ENCODE measurements at regions of chr10 and their contacts with region 1.

Region 1: DNA sequence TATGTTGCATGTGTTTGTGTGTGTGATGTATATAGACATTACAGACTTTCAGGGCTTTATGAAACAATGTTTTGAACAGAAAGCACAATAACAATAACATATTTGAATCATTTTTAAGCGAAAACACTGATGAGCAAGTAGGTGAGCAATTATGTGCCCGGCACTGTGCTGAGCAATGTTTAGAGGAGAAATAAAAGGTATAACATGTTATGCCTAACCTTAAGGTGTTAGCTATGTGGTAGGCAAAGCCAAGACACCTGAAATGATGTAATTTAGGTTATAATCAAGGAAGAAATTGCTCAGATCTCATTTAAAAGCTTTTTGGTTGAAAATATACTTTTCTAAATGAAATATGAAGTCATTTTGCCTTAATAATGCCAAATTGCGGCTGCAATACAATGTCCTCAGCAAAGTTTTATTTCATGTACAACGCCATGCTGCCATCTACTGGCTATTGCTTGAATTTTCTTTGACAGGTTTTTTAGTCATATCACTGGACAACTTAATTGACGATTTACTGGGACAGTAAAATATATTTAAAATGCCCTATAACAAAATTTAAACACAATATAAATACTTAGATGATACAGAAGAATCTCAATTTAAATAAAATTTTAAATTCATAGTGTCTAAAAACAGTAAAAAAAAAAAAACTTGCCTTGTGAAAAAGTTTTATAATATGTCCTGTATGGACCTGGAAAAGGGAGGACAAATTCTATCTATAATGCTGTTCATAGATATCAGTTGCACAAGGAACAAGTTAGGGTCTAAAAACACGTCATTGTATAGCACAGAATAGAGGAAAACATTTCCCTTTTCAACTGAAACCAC is 131.1 kb upstream of the CDK1 start:
- DNase-seq: peak; percentile 71
- H3K4me3 Mint-ChIP-seq: no peak overlapping the region
- H3K27ac Mint-ChIP-seq: no peak overlapping the region
- H3K4me1 Mint-ChIP-seq: peaks cover 10% of the 10 kb centered on the region
- H3K27me3 Mint-ChIP-seq: no peaks in the 10 kb centered on the region

Region 2: DNA sequence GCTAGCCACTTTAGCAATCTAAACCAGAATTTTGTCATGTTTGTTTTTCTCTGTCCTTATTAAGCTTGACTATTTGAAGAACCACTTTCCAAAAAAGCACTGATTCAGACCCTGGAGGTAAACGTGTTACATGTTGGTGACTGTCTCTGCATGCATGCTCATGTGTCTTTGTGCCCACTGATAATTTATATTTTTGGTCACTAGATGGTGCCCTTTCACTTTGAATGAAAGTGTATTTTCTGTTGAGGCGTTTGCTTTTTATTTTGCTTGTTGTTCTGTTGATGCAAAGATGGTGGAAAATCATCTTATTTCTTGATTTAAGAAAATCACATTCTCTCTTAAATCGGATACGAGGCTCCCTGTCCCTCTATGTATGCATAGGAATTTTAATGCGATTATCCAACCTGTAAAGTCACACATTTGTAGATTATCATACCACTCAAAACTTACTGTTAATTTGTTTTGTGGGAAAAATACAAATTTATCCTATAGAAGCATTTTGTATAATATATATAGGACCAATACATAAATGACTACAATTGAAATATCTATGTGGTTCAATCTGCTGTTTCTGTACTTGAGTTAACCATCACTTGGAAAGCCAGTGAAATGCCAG is 1865.2 kb before region 1 on chr10:
- CTCF ChIA-PET with region 1: no interaction called
- intact Hi-C with region 1: loop called (anchors 10 kb)
- DNase-seq: peak; percentile 4
- H3K4me3 Mint-ChIP-seq: no peak overlapping the region
- H3K27ac Mint-ChIP-seq: no peak overlapping the region
- H3K4me1 Mint-ChIP-seq: no peaks in the 10 kb centered on the region
- H3K27me3 Mint-ChIP-seq: peaks cover 8% of the 10 kb centered on the region

Region 3: GRCh38 chr10:60208676-60209269 is 438.4 kb before region 1 on chr10:
- CTCF ChIA-PET with region 1: interaction called, 14 read pairs
- intact Hi-C with region 1: loop called (anchors 1 kb)
- DNase-seq: no peak
- H3K4me3 Mint-ChIP-seq: no peak overlapping the region
- H3K27ac Mint-ChIP-seq: no peak overlapping the region
- H3K4me1 Mint-ChIP-seq: peaks cover 17% of the 10 kb centered on the region
- H3K27me3 Mint-ChIP-seq: no peaks in the 10 kb centered on the region

Region 4: GRCh38 chr10:60314069-60314940 is 332.9 kb before region 1 on chr10:
- CTCF ChIA-PET with region 1: no interaction called
- intact Hi-C with region 1: loop called (anchors 10 kb)
- DNase-seq: no peak
- H3K4me3 Mint-ChIP-seq: no peak overlapping the region
- H3K27ac Mint-ChIP-seq: no peak overlapping the region
- H3K4me1 Mint-ChIP-seq: peaks cover 23% of the 10 kb centered on the region
- H3K27me3 Mint-ChIP-seq: no peaks in the 10 kb centered on the region

Region 5: DNA sequence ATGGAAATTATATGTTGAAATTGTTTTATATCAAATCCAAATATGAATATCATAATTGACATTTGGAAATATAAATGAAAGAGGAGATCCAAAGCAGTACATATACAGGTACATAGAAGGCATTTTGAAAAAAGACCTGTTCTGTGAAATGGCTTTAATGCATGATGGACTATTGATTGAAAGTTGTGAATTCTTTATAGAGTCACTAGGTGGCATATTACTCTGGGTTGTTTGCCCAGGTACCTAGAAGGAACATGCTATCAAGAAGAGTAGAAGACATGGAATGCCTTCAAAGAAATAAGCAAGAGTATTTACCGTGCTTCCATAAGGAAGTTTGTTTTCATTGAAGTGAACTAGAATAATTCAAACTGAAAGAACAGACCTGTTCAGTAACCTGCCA is 97.5 kb before region 1 on chr10:
- CTCF ChIA-PET with region 1: interaction called, 8 read pairs
- intact Hi-C with region 1: loop called (anchors 1 kb)
- DNase-seq: no peak
- H3K4me3 Mint-ChIP-seq: no peak overlapping the region
- H3K27ac Mint-ChIP-seq: no peak overlapping the region
- H3K4me1 Mint-ChIP-seq: peaks cover 1% of the 10 kb centered on the region
- H3K27me3 Mint-ChIP-seq: no peaks in the 10 kb centered on the region

Region 6: DNA sequence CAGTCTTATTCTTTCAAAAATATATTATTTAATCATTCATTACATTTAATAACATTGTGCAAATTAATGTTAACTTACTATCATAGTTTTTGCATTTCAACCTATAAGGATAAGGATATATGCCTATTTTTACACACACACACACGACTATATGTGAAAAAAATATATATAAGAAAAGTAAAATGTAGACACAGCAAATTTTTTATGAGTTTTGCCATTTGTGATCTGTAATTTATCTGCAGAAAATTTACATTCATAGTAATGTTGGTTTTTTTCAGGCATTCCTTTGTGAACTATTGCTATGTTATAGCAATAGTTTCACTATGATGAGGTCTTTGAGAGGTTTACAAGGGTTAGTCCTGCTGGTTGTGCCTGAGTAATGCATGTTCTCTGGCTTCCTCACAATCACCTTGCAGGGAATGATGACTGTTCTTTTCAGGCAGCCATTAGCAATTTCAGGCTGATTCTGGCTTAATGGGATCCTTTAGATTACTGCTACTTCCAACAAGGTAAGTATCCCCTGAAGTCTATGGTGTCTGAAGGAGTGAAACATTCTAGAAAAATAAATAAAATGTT is 52.6 kb before region 1 on chr10:
- CTCF ChIA-PET with region 1: no interaction called
- intact Hi-C with region 1: no loop called
- DNase-seq: peak; percentile 19
- H3K4me3 Mint-ChIP-seq: no peak overlapping the region
- H3K27ac Mint-ChIP-seq: no peak overlapping the region
- H3K4me1 Mint-ChIP-seq: peaks cover 19% of the 10 kb centered on the region
- H3K27me3 Mint-ChIP-seq: no peaks in the 10 kb centered on the region

Measured in activated naive CD4-positive, alpha-beta T cell treated with anti-CD3 and anti-CD28 coated beads for 36 hours (primary cell).